Left cardiac atrium (tissue), 4 donors: ENCODE measurements at regions of chr22 and their contacts with region 1.

Region 1: DNA sequence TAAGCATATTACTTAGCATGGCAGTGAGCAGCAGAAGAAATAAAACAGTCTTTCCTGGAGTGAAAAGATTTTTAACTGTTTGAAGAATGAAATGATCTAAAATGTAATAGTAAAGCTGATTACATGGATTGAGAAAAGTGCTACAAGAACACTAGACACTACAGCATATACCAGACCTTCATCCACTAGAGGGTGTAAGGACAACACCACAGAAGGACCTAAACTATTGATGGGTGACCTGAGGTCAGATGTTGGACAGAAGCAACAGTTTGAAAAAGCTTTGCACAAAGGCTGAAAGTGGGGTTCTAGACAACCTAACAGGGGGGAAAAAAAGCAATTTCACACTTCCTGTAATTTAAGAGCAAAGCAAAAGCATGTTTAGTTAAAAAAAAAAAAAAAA is 97.7 kb downstream of the RBFOX2 start:
- DNase-seq: no peak
- ATAC-seq: peak; percentile 88 to 99

Region 2: GRCh38 chr22:35684270-35684700 is 246.6 kb before region 1 on chr22:
- intact Hi-C with region 1: no loop called
- DNase-seq: no peak
- ATAC-seq: peak; percentile 74 to 93

Region 3: DNA sequence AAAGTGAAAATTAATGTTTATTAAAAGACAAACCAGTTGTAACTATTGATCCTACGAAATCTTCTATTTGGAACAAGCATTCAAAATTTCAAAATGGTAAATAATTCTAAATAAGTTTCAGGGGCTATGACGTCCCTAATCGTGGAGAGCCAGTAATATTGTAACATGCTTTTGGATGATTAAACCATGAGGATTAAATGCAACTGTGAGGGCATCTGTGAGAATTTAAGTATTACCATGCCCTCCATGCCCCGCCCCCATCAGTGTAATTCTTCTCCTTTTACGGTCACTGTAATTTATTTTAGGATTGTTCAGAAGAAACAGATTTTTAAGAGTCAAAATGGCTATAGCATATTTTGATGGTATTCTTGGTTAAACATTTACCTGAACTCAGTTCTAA is 80.1 kb before region 1 on chr22:
- intact Hi-C with region 1: no loop called
- DNase-seq: no peak
- ATAC-seq: no peak

Region 4: GRCh38 chr22:36028646-36029405 is 97.9 kb after region 1 on chr22 and contains the start of gene RBFOX2:
- intact Hi-C with region 1: loop called in 1 of 2 experiments (anchors 5 kb)
- DNase-seq: peak; percentile 98
- ATAC-seq: peak; percentile 95 to 96
- total RNA-seq, gene RBFOX2: 71.5 to 73.6 TPM

Region 5: GRCh38 chr22:36065775-36066559 is 135.0 kb after region 1 on chr22:
- intact Hi-C with region 1: loop called (anchors 2 to 10 kb)
- DNase-seq: peak; percentile 95
- ATAC-seq: peak; percentile 93 to 94

Region 6: DNA sequence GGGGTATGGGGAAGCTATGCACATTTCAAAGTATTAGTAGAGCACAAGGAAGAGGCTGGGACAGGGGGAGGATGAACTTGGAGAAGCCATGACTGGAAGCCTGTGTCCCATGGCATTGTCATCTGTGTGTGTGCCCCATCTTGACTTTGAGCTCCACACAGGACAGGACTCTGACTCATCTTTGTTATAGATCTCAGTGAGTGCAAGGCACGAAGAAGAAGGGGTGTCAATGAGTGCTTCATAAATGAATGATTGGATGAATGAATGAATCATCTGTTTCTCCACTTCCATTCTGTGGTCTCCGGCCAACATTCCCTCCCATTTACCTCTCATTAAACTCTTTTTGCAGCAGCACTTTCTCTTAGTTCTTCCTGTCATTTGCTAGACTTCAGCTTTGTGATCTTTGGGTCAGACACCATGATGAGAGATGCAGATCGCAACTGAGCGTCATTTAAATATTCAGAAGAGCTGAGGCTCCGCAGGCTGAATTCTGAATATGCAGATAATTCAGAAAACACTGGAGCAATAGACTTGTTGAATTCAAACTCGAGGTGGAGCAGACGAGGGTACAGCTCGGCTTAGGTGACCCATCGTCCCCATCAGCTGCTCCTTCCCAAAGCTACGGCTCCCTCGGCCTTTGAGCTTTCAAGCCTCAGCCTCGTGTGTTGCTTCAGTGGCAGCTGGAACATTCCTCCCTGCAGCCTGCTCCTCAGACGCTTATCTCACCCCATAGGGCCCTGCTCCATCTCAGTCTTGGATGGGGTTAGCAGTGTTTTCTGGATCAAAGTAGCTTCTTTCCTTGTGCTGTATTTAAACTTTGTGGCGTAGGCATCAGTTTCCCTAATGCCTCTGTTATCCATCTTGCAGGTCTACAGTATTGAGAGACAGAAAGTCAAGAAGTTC is 198.8 kb after region 1 on chr22:
- intact Hi-C with region 1: loop called (anchors 2 to 5 kb)
- DNase-seq: no peak
- ATAC-seq: peak in 1 of 2 donors; percentile 43

Region 7: GRCh38 chr22:36220437-36220921 is 289.5 kb after region 1 on chr22:
- intact Hi-C with region 1: no loop called
- DNase-seq: no peak
- ATAC-seq: peak in 1 of 2 donors; percentile 87

Region 8: DNA sequence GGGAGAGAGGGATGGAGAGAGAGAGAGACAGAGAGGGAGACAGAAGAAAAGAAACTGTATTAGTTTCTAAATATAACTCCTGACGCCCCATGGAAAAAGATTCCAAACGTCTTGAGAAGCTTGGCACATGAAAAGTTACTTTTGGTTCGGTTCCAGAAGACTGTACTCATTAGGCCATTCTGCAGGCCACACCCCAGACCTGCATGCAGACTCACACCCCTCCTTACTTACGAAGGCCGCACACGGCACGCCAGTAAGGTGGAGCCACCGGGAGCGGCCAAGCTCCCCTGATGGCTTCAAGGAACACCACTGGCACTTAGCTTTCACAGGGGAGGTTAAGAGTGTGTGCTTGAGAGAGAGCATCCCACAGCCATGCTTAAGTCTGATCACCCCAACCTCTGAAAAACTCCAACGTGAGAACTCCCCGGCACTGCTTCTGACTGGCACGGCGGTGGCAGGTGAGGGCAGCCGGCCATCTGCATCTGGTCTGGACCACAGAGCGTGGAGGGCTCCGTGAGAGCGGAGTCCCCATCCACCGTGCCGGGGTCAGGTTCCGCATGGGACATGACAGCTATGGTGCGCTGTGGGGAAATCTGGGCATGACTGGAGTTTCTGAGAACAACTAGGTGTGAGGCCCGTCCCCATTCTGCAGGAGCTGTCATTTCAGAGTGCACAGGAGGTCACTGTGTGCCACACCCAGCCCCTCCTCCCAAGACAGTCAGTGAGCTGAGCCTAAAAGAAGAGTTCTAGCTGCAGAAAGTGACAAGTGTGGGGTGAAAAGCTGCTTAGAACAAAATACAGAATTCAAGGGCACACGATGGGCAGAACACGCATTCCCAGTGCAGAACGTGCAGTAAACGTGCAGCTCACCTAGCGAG is 394.5 kb after region 1 on chr22:
- intact Hi-C with region 1: no loop called
- DNase-seq: peak; percentile 77
- ATAC-seq: peak; percentile 1 to 32